Calu3 (cell line): ENCODE measurements at regions of chr19 and their contacts with region 1.

Region 1: DNA sequence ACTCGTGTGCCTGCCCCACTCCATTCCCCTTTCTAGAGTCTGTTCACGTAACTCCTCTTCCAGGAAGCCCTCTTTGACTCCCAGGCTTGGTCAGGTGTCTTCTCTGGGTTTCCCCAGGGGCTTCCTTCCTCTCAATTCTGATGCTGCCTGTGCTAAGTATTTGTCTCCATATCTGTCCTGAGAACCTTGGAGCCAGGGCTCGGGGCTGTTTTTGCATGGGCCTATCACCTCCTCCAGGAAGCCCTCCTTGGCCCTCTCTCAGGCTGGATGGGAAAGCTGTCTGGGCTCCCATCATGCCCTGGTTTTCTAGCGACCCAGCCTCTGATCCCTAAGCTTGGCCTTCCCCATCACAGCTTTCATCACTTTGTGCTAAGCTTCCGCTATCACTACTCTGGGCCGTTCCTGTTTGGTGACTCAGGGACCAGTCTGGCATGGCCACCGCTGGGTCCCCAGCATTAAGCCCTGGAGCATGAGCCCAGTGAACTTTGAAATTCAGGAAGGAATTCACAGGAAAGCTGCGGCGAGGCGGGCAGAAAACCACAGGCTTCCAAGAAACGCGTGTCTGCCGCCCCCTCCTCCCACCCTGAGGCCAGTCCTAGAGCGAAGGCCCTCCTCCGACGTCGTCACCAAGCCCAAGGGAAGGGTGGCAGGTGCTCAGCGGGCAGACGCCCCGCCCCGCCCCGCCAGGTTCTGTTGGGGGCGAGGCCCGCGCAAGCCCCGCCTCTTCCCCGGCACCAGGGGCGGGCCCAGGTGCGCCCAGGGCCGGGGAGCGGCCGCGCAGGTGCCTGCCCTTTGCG is 486 bp upstream of the SPINT2 start:
- DNase-seq: peak; percentile 100
- H3K4me3 Mint-ChIP-seq: peak overlapping the region; percentile 97
- H3K27ac Mint-ChIP-seq: peak overlapping the region; percentile 81
- H3K4me1 Mint-ChIP-seq: peaks cover 56% of the 10 kb centered on the region
- H3K27me3 Mint-ChIP-seq: no peaks in the 10 kb centered on the region
- CTCF ChIP-seq: no peak

Region 2: GRCh38 chr19:38277969-38278680 is 14.2 kb after region 1 on chr19:
- CTCF ChIA-PET with region 1: interaction called, 16 read pairs
- intact Hi-C with region 1: no loop called
- DNase-seq: no peak
- H3K4me3 Mint-ChIP-seq: peak overlapping the region; percentile 26
- H3K27ac Mint-ChIP-seq: peak overlapping the region; percentile 54
- H3K4me1 Mint-ChIP-seq: peaks cover 62% of the 10 kb centered on the region
- H3K27me3 Mint-ChIP-seq: no peaks in the 10 kb centered on the region
- CTCF ChIP-seq: no peak

Region 3: DNA sequence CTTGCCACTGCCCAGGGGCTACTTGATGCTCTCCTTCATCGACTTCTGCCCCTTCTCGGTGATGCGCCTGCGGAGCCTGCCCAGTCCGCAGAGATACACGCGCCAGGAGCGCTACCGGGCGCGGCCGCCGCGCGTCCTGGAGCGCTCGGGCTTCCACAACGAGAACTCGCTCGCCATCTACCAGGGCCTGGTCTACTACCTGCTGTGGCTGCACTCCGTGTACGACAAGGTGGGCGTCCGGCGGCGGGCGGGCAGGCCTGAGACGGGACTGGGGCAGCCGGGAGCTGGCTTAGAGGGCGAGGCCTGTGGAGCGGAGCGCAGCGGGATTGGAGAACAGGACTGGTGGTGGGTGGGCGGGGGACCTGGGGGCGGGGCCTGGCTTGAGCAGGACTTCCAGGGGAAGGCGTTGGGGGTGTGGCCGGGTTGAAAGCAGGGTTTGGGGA is 97.8 kb after region 1 on chr19:
- CTCF ChIA-PET with region 1: interaction called, 10 read pairs
- intact Hi-C with region 1: no loop called
- DNase-seq: peak; percentile 88
- H3K4me3 Mint-ChIP-seq: peak overlapping the region; percentile 76
- H3K27ac Mint-ChIP-seq: peak overlapping the region; percentile 29
- H3K4me1 Mint-ChIP-seq: peaks cover 11% of the 10 kb centered on the region
- H3K27me3 Mint-ChIP-seq: peaks cover 63% of the 10 kb centered on the region
- CTCF ChIP-seq: peak; percentile 27